ENCODE measurements at regions of chr3 and their contacts with region 1.

Region 1: GRCh38 chr3:42749753-42750231 is 23.3 kb downstream of the CCDC13 start:
- DNase-seq: no peak
- ATAC-seq: no peak
- H3K4me3 Mint-ChIP-seq: no peak overlapping the region
- H3K27ac Mint-ChIP-seq: no peak overlapping the region
- H3K4me1 Mint-ChIP-seq: peaks cover 5% of the 10 kb centered on the region
- H3K27me3 Mint-ChIP-seq: no peaks in the 10 kb centered on the region
- CTCF ChIP-seq: no peak

Region 2: GRCh38 chr3:42247576-42248027 is 502.2 kb before region 1 on chr3:
- CTCF ChIA-PET with region 1: no interaction called
- POLR2A ChIA-PET with region 1: no interaction called
- intact Hi-C with region 1: loop called (anchors 10 kb)
- DNase-seq: no peak
- ATAC-seq: peak; percentile 49
- H3K4me3 Mint-ChIP-seq: no peak overlapping the region
- H3K27ac Mint-ChIP-seq: no peak overlapping the region
- H3K4me1 Mint-ChIP-seq: peaks cover 2% of the 10 kb centered on the region
- H3K27me3 Mint-ChIP-seq: peaks cover 16% of the 10 kb centered on the region
- CTCF ChIP-seq: no peak

Region 3: DNA sequence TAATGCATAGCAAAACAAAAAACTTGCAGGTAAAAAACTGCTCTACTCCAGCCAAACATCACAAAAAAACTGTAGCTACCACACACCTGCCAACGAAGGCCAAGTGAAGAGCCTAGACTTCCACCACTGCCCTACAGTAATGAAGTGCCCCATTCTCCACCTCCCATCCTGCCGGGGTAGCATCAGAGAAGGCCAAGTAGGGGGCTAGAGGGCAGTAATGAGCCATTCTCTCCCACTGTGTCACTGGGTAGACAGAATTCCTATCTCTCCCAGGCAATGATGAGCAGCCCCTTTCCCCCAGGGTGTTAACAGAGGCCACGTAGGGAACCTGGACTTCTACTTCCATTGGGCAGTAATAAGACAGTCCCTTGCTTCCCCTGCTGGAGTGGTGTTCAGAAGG is 177.5 kb before region 1 on chr3:
- CTCF ChIA-PET with region 1: interaction called, 6 read pairs
- POLR2A ChIA-PET with region 1: no interaction called
- intact Hi-C with region 1: loop called (anchors 1 kb)
- DNase-seq: no peak
- ATAC-seq: no peak
- H3K4me3 Mint-ChIP-seq: no peak overlapping the region
- H3K27ac Mint-ChIP-seq: no peak overlapping the region
- H3K4me1 Mint-ChIP-seq: peaks cover 4% of the 10 kb centered on the region
- H3K27me3 Mint-ChIP-seq: no peaks in the 10 kb centered on the region
- CTCF ChIP-seq: no peak

Region 4: GRCh38 chr3:42772670-42773408 is 23.0 kb after region 1 on chr3 and contains the start of gene CCDC13:
- CTCF ChIA-PET with region 1: no interaction called
- POLR2A ChIA-PET with region 1: no interaction called
- intact Hi-C with region 1: loop called (anchors 2 kb)
- DNase-seq: peak; percentile 97
- ATAC-seq: peak; percentile 90
- H3K4me3 Mint-ChIP-seq: peak within 1 kb of the TSS; percentile 90
- H3K27ac Mint-ChIP-seq: peak within 1 kb of the TSS; percentile 89
- H3K4me1 Mint-ChIP-seq: peaks cover 13% of the 10 kb centered on the region
- H3K27me3 Mint-ChIP-seq: no peaks in the 10 kb centered on the region
- CTCF ChIP-seq: no peak
- total RNA-seq, gene CCDC13: 1.7 and 1.9 TPM in 2 replicates

Region 5: GRCh38 chr3:43155464-43156121 is 405.8 kb after region 1 on chr3:
- CTCF ChIA-PET with region 1: no interaction called
- POLR2A ChIA-PET with region 1: no interaction called
- intact Hi-C with region 1: no loop called
- DNase-seq: no peak
- ATAC-seq: no peak
- H3K4me3 Mint-ChIP-seq: no peak overlapping the region
- H3K27ac Mint-ChIP-seq: no peak overlapping the region
- H3K4me1 Mint-ChIP-seq: no peaks in the 10 kb centered on the region
- H3K27me3 Mint-ChIP-seq: peaks cover 33% of the 10 kb centered on the region
- CTCF ChIP-seq: no peak